ENCODE measurements at regions of chr1 and their contacts with region 1.

Region 1: DNA sequence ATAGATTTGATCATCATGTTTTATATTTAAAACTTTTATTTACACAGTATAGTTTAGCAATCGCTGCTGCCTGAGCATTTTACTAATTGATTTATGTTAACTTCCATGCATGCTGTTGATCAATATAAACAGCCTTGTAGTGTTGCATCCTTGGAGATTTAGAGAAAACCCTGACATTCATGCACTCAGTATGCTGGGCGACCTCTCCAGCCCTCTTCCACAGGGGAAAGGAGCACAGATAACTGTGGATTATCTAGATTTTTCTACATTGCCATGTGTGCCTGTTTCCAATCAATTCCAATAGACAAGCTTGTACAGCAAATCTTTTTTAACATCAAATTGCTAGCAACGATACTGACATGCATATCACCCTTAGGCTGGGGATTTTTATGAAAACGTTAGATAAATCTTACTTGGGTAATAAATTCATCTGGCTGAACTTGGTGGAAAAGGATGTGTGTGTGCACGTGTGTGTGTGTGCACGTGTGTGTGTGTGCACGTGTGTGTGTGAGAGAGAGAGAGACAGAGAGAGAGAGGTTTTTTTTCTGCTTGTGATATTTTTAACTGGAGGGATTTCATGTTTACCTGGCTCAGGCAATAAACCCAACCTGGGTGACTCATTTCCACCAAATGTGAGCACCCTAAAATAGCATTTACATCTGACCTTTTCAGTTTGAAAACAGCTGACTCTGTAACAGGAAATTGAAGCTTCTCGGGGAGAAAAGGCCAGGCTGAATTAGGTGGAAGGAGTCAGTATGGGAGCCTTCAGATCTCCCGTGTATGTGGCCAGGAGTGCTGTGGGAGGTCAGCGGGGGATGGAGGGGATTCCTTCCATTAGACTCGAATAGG is 339.8 kb downstream of the PRDM2 start:
- DNase-seq: no peak
- ATAC-seq: no peak
- H3K4me3 ChIP-seq: no peak overlapping the region
- H3K27ac ChIP-seq: no peak overlapping the region
- H3K4me1 ChIP-seq: no peaks in the 10 kb centered on the region
- H3K27me3 ChIP-seq: no peaks in the 10 kb centered on the region
- CTCF ChIP-seq: no peak

Region 2: GRCh38 chr1:14190508-14190907 is 150.7 kb after region 1 on chr1:
- intact Hi-C with region 1: loop called (anchors 5 kb)
- DNase-seq: no peak
- ATAC-seq: peak; percentile 15
- H3K4me3 ChIP-seq: no peak overlapping the region
- H3K27ac ChIP-seq: no peak overlapping the region
- H3K4me1 ChIP-seq: no peaks in the 10 kb centered on the region
- H3K27me3 ChIP-seq: no peaks in the 10 kb centered on the region
- CTCF ChIP-seq: no peak

Measured in upper lobe of right lung (tissue), 1 donor.